ENCODE measurements at regions of chr14 and their contacts with region 1.

Region 1: DNA sequence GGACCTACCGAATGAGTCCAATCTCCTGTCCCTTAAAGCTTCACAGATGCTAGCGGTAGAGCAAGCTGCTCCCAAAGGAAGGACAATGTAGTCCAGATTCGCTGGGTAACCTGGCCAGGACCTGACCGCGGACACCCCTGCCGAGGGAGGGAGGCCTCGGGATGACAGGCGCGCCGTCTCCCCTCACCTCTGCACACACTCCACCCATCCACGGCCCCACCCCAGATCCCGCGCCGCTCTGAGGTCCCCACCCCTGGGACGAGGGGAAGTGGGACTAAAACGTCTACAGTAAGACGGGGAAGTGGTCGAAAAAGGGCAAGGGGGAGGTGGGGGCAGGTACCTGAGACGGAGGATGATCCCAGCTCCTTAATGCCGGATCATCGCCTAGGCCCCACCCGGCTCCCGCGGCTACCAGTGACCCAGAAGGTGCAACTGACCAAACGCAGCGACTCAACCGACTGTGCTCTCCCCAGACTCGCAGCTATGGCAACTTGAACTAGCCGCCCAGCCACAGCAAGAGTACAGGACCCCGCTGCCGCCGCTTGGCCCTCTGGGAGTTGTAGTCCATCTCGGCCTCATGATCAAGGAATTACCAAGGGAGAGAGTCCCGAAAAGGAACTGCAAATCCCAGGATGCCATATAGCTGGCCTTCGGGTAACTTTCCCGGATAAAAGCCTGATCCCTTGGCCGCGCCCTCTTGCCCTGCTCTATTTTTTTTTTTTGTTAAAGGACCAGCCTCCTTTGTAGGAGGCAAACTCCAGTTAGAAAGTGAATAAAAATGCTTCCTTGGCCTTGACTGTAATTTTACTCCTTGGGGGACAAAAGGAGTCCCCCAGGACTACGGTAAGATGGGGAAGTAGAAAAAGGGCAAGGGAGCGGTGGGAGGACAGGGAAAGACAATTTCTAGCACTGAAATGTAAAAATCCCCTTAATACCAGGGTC is at the start of gene CEP128:
- DNase-seq: peak; percentile 97
- H3K4me3 ChIP-seq: peak within 1 kb of the TSS; percentile 91
- H3K27ac ChIP-seq: peak within 1 kb of the TSS; percentile 68
- H3K4me1 ChIP-seq: peaks cover 30% of the 10 kb centered on the region
- CTCF ChIP-seq: no peak
- total RNA-seq, gene CEP128: 71.9 and 76.9 TPM in 2 replicates

Region 2: GRCh38 chr14:80930836-80931389 is 10.6 kb before region 1 on chr14:
- CTCF ChIA-PET with region 1: interaction called, 3 read pairs
- POLR2A ChIA-PET with region 1: interaction called, 67 read pairs
- intact Hi-C with region 1: loop called (anchors 1 kb)
- DNase-seq: peak; percentile 94
- H3K4me3 ChIP-seq: peak overlapping the region; percentile 42
- H3K27ac ChIP-seq: peak overlapping the region; percentile 97
- H3K4me1 ChIP-seq: peaks cover 80% of the 10 kb centered on the region
- CTCF ChIP-seq: no peak

Region 3: GRCh38 chr14:80973931-80974641 is 32.6 kb after region 1 on chr14:
- CTCF ChIA-PET with region 1: no interaction called
- POLR2A ChIA-PET with region 1: interaction called, 14 read pairs
- intact Hi-C with region 1: no loop called
- DNase-seq: no peak
- H3K4me3 ChIP-seq: no peak overlapping the region
- H3K27ac ChIP-seq: no peak overlapping the region
- H3K4me1 ChIP-seq: peaks cover 53% of the 10 kb centered on the region
- CTCF ChIP-seq: no peak

Region 4: GRCh38 chr14:81220830-81221578 is 279.5 kb after region 1 on chr14 and contains the start of gene GTF2A1:
- CTCF ChIA-PET with region 1: no interaction called
- POLR2A ChIA-PET with region 1: interaction called, 4 read pairs
- intact Hi-C with region 1: loop called (anchors 5 kb)
- DNase-seq: peak; percentile 97
- H3K4me3 ChIP-seq: peak within 1 kb of the TSS; percentile 92
- H3K27ac ChIP-seq: peak within 1 kb of the TSS; percentile 93
- H3K4me1 ChIP-seq: peaks cover 34% of the 10 kb centered on the region
- CTCF ChIP-seq: no peak
- total RNA-seq, gene GTF2A1: 32.5 and 35.1 TPM in 2 replicates

Measured in OCI-LY7 (cell line).